GM10248 (cell line): ENCODE measurements at regions of chr10 and their contacts with region 1.

Region 1: GRCh38 chr10:99579616-99580370 is 40.4 kb downstream of the SLC25A28 start:
- DNase-seq: no peak
- CTCF ChIP-seq: no peak

Region 2: DNA sequence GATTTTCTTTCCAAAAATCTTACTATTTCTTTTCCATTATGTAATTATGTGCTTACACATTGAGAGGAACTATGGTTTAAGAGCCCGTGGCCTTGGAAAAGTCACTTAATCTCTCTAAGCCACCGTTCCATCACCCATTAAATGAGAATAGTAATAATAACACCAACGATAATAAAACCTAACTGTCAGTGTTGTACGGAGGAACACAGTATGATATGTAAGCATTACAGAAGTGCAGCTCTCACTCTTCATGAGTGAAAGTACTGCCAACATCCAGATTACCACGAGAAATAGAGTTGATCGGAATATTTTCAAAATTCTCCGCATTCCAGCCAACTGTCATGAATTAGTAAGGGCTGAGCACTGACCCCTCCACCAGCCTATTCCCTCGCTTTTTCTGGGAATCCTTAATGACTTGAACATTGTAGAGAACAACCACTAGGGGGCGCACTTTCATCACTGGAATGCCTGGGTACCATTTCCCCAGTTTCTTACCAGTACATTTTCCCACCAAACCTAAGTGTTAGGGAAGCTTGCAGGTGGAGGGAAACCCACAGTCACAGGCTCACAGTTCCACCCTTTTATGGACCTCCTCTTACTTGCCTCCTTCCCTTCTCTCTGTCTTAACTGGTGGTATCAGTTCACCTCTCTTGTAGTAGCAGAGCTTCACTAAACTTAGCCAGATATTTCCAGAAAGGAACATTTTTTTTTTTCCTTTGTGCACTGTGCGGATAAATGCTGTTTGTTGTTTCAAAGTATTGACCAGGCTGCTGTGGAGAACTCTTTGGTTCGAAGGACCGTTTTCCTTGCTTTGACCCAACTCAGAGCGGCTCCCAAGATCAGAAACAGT is 19.3 kb before region 1 on chr10:
- CTCF ChIA-PET with region 1: interaction called, 34 read pairs
- POLR2A ChIA-PET with region 1: no interaction called
- DNase-seq: peak; percentile 45
- CTCF ChIP-seq: peak; percentile 65